ENCODE measurements at regions of chr19 and their contacts with region 1.

Region 1: DNA sequence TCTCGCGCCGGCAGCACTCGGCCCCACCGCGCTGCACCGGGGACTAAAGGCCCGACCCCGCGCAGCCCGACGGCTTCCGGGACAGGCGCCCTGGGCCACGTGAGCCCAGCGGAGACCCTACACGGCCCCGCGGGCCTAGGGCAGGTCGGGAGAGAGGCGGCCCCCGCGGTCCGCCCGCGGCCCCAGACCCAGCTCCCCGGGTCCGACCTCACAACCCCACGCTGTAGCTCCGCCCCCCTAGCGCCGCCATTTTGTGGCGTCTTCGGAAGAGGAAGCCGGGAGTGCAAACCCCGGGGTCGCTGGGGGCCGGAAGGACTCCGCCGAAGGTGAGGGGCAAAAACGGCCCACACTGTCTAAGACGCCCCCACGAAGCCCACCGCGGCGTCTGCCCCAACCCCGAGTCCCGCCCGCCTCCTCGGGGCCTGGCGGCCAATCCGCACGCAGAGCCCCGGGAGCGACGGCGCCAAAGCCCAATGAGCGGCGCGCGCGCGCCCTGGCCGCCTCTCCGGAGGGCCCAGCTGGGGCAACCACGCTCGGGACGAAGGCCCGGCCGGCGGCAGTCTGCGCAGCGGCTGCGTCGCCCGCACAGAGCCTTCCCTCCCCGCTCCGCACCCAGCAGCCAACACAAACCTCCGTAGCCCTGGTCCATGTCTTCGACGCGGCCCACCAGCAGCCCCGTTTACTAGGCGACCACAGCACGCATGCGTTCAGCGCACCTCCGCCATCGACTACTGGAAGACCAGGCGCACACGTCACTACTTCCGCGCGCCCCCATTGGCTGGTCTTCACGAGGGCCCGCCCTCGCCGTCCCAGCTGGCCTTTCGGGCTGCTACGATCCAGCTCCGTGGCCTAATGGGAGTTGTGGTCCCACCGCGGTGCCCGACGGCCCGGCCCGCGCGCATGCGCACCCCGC is at the start of gene AKAP8:
- DNase-seq: peak; percentile 96 to 99 (median 98)
- H3K4me3 ChIP-seq: peak within 1 kb of the TSS; percentile 52 to 100 (median 96)
- H3K27ac ChIP-seq: peak within 1 kb of the TSS; percentile 71 to 99 (median 96)
- H3K27me3 ChIP-seq: no peaks in the 10 kb centered on the region
- CTCF ChIP-seq: peak in 7 of 56 donors; percentile 8 to 50 (median 28)
- total RNA-seq, gene AKAP8: 18.6 to 51.6 (median 29.6) TPM

Region 2: GRCh38 chr19:15404780-15405211 is 25.5 kb after region 1 on chr19:
- intact Hi-C with region 1: no loop called
- DNase-seq: peak in 2 of 10 donors; percentile 19 to 43
- H3K4me3 ChIP-seq: peak overlapping the region in 17 of 59 donors; percentile 0 to 31 (median 7)
- H3K27ac ChIP-seq: peak overlapping the region in 54 of 59 donors; percentile 19 to 84 (median 60)
- H3K27me3 ChIP-seq: no peaks in the 10 kb centered on the region
- CTCF ChIP-seq: no peak

Region 3: GRCh38 chr19:15418588-15419412 is 39.5 kb after region 1 on chr19 and contains the start of gene AKAP8L:
- intact Hi-C with region 1: loop called (anchors 1 kb)
- DNase-seq: peak; percentile 91 to 99 (median 98)
- H3K4me3 ChIP-seq: peak within 1 kb of the TSS; percentile 73 to 100 (median 98)
- H3K27ac ChIP-seq: peak within 1 kb of the TSS; percentile 0 to 97 (median 89)
- H3K27me3 ChIP-seq: no peaks in the 10 kb centered on the region
- CTCF ChIP-seq: peak in 53 of 56 donors; percentile 29 to 69 (median 52)
- total RNA-seq, gene AKAP8L: 104 to 260 (median 142) TPM